Right ventricle myocardium inferior (tissue), 1 donor: ENCODE measurements at regions of chr15 and their contacts with region 1.

Region 1: DNA sequence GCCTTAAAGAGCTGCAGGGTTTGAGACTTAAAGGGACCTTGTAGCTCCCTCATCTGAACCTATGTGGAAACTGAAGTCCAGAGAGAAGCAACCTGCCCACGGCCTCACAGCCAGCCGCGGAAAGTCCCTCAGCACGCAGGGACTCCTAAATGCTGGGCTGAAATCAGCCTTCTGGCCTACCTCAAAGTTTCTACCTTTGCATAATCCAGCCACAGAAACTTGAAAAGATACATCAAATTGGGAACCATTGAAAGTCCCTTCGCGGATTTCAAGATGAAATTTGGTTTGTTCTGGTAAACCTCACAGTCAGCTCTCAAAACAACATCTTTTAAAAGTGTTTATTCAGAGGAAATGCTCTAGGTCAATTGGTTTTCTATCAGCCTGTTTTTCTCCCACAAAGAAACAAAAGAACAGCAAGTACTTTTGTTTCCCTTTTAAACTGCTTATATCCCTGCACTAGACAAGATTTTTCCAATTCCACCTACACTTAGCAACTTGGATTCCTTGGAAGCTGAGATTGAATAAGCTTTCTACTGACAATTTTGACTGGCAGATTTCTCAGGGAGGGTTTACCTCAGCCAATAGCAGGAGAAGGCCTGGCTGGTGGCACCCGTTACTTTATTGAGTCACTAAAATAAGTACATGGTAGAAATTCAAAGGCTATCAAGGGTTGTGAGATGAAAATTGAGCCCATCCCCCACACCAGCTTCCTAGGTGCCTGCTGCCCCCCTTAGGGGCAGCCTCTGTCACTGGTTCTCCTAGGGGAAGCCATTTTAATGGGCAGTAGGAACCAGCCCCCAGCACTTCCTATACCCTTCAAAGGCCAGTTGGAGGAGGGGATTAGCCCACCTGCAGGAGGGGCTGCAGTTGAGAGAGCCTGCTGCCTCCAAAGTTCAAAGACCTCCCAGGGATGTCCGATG is 171.2 kb downstream of the ADAMTS17 start:
- DNase-seq: no peak
- ATAC-seq: no peak

Region 2: GRCh38 chr15:99264125-99264524 is 906.4 kb before region 1 on chr15:
- intact Hi-C with region 1: no loop called
- DNase-seq: no peak
- ATAC-seq: no peak

Region 3: DNA sequence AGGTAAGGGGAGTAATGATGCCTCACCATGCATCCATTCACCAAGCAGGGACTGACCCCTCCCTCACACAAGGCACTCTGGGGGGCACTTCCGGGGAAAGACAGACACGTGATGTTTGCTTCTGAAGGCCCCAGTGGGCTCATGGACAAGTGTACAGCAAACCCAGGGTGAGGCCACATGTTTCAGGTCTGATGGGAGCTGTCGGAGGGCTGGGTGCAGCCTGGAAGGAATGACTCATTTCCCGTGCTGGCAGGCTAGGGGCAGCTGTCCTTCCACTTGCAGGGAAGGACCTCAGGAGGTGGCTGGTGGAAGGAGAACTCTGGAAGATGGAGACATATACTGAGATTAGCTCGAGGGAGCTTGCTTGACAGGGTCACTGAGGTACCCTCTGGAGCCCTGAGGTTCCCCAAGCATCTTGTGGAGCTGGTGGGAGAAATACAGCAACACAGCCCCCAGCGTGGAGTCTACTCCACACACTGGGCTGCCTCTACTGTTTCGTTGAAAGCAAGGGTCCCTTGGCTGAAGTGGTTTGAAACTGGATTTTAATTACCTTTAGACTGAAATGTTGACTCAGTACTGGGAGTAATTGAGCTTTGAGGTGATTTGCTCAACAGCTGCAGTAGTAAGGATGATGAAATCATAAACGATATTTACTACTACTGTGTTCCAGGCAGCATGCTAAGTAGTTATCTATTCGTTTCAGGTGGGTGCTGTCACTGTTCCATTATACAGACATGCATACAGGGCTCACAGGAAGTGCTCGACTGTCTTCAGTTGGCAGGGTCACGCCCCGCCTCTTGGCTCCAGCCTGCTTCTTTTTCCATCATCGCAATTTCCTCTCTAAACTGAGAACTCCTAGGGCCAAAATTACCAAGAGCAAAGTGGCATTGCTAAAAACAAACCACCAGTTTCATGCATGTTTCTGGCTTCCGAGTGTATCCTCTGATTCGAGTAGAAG is 59.2 kb before region 1 on chr15:
- intact Hi-C with region 1: no loop called
- DNase-seq: peak; percentile 72
- ATAC-seq: peak; percentile 66

Region 4: DNA sequence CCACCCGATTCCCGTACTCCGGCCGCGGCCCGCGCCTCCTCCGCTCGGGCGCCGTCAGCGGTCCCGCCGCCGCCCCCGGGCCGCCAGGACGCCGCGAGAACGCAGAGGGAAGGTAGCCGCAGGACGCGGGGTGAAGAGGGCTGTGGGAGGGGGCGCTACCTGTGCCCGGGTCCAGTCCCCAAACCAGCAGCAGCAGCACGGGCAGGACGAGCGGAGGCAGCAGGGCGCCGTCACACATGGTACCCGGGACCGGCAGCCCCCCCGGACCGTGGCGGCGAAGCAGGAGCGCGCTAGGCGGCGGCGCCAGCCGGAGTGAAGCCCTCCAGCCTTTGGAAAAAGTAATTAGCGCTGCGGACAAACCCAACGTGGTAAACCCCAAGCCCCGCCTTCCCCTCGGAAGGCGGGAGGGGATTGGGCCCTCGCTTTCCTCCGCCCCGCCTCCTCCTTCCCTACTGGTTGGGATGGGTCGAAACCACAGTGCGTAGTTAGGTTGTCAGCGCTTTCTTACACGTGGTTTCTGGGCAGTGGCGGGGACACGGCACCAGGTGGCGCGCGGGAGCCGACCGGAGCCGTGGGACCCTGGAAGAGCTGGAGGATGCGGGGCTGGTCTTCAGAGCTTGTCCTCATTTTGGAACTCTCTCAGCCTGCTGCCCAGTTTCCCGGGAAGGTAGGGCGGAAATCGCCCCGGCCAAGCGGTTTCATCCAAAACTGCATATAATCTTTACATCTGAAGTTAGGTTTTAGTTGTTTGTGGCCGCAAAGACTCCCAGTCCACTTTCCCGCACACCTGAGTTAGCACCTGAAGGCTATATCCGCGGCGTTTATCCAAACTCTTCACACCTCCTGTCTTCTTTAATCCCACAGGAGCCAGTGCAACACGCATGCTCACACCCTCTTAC is 171.4 kb after region 1 on chr15 and contains the start of gene ADAMTS17:
- intact Hi-C with region 1: loop called (anchors 10 kb)
- DNase-seq: peak; percentile 96
- ATAC-seq: peak; percentile 99
- total RNA-seq, gene ADAMTS17: 1.4 TPM